ENCODE measurements at regions of chr7 and their contacts with region 1.

Region 1: GRCh38 chr7:87886875-87887274 is 10.6 kb downstream of the DBF4 start:
- DNase-seq: peak in 1 of 35 experiments; percentile 64
- ATAC-seq: no peak
- H3K4me3 ChIP-seq: no peak overlapping the region
- H3K4me3 Mint-ChIP-seq: no peak overlapping the region
- H3K27ac ChIP-seq: no peak overlapping the region
- H3K27ac Mint-ChIP-seq: no peak overlapping the region
- H3K4me1 ChIP-seq: no peaks in the 10 kb centered on the region
- H3K4me1 Mint-ChIP-seq: peaks cover 6 to 13% (median 11%) of the 10 kb centered on the region in 3 donors
- H3K27me3 ChIP-seq: no peaks in the 10 kb centered on the region
- H3K27me3 Mint-ChIP-seq: no peaks in the 10 kb centered on the region

Region 2: GRCh38 chr7:87129848-87130247 is 757.0 kb before region 1 on chr7:
- CTCF ChIA-PET with region 1: no interaction called
- POLR2A ChIA-PET with region 1: no interaction called
- DNase-seq: no peak
- ATAC-seq: no peak
- H3K4me3 ChIP-seq: no peak overlapping the region
- H3K4me3 Mint-ChIP-seq: no peak overlapping the region
- H3K27ac ChIP-seq: no peak overlapping the region
- H3K27ac Mint-ChIP-seq: no peak overlapping the region
- H3K4me1 ChIP-seq: no peaks in the 10 kb centered on the region
- H3K4me1 Mint-ChIP-seq: peaks cover 0 to 8% (median 2%) of the 10 kb centered on the region in 3 donors
- H3K27me3 ChIP-seq: no peaks in the 10 kb centered on the region
- H3K27me3 Mint-ChIP-seq: peaks cover 3 to 12% of the 10 kb centered on the region in 2 donors

Region 3: GRCh38 chr7:87506246-87507180 is 380.4 kb before region 1 on chr7:
- CTCF ChIA-PET with region 1: interaction called, 3 to 18 read pairs
- POLR2A ChIA-PET with region 1: no interaction called
- DNase-seq: peak in 1 of 35 experiments; percentile 25
- ATAC-seq: no peak
- H3K4me3 ChIP-seq: no peak overlapping the region
- H3K4me3 Mint-ChIP-seq: no peak overlapping the region
- H3K27ac ChIP-seq: no peak overlapping the region
- H3K27ac Mint-ChIP-seq: no peak overlapping the region
- H3K4me1 ChIP-seq: no peaks in the 10 kb centered on the region
- H3K4me1 Mint-ChIP-seq: no peaks in the 10 kb centered on the region
- H3K27me3 ChIP-seq: no peaks in the 10 kb centered on the region
- H3K27me3 Mint-ChIP-seq: no peaks in the 10 kb centered on the region

Region 4: DNA sequence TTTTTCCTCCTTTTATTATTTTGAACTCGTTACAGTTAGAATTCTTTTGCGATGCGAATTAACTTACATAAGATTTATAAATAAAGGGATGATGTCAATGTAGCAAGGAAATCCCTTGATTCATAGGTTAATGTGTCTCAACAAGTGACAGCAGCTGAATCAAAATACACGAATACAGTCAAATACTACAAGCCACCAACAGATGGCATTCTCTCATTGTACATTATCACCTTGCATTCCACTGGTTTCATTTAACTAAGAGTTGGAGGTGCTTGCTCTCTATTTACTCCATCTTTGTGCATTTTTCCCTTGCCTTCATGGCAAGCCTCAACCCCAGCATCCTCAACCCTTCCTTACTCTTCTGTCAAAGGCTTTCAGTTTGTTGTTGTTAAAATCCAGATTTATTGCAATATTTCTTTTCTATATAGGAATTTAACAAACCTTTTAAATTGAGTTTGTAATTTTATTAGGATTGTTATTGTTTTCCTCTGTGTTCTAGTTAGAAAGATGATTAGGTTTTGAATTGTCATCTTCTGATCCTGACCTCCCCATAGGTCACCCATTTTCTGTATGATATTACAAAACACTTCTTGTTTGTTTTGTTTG is 89.0 kb before region 1 on chr7:
- CTCF ChIA-PET with region 1: interaction called, 4 to 45 read pairs
- POLR2A ChIA-PET with region 1: interaction called in 1 of 2 experiments, 3 read pairs
- DNase-seq: peak in 2 of 35 experiments; percentile 6 to 66
- ATAC-seq: peak; percentile 47 to 78 (median 55)
- H3K4me3 ChIP-seq: no peak overlapping the region
- H3K4me3 Mint-ChIP-seq: no peak overlapping the region
- H3K27ac ChIP-seq: no peak overlapping the region
- H3K27ac Mint-ChIP-seq: no peak overlapping the region
- H3K4me1 ChIP-seq: no peaks in the 10 kb centered on the region
- H3K4me1 Mint-ChIP-seq: no peaks in the 10 kb centered on the region
- H3K27me3 ChIP-seq: no peaks in the 10 kb centered on the region
- H3K27me3 Mint-ChIP-seq: peaks cover 10 to 13% of the 10 kb centered on the region in 2 donors

Region 5: DNA sequence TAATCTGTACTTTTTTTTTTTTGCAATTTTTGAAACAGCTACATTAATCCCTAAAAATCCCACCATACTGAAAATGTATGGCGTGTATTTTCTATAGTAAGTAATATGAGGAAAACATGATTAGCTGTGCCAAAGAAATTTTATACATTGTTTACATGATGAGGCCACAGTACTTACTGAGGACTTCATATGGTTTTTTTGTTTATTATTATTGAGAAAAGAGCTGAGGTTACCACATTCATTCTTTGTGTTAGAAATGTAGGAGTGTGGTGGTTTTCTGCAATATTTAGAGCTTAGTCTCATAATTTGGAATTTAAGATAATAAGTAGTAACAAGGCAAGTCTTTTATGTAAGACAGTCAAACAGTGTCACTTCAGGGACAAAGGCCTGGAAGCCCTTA is 55.8 kb before region 1 on chr7:
- CTCF ChIA-PET with region 1: no interaction called
- POLR2A ChIA-PET with region 1: no interaction called
- DNase-seq: no peak
- ATAC-seq: no peak
- H3K4me3 ChIP-seq: no peak overlapping the region
- H3K4me3 Mint-ChIP-seq: no peak overlapping the region
- H3K27ac ChIP-seq: no peak overlapping the region
- H3K27ac Mint-ChIP-seq: no peak overlapping the region
- H3K4me1 ChIP-seq: no peaks in the 10 kb centered on the region
- H3K4me1 Mint-ChIP-seq: no peaks in the 10 kb centered on the region
- H3K27me3 ChIP-seq: no peaks in the 10 kb centered on the region
- H3K27me3 Mint-ChIP-seq: no peaks in the 10 kb centered on the region

Region 6: GRCh38 chr7:87866089-87866488 is 20.8 kb before region 1 on chr7:
- CTCF ChIA-PET with region 1: interaction called, 4 to 6 read pairs
- POLR2A ChIA-PET with region 1: interaction called, 5 to 14 read pairs
- DNase-seq: no peak
- ATAC-seq: no peak
- H3K4me3 ChIP-seq: no peak overlapping the region
- H3K4me3 Mint-ChIP-seq: no peak overlapping the region
- H3K27ac ChIP-seq: no peak overlapping the region
- H3K27ac Mint-ChIP-seq: no peak overlapping the region
- H3K4me1 ChIP-seq: no peaks in the 10 kb centered on the region
- H3K4me1 Mint-ChIP-seq: peaks cover 6 to 10% (median 7%) of the 10 kb centered on the region in 3 donors
- H3K27me3 ChIP-seq: no peaks in the 10 kb centered on the region
- H3K27me3 Mint-ChIP-seq: no peaks in the 10 kb centered on the region

Region 7: GRCh38 chr7:88686468-88687229 is 799.8 kb after region 1 on chr7:
- CTCF ChIA-PET with region 1: no interaction called
- POLR2A ChIA-PET with region 1: no interaction called
- DNase-seq: no peak
- ATAC-seq: no peak
- H3K4me3 ChIP-seq: no peak overlapping the region
- H3K4me3 Mint-ChIP-seq: no peak overlapping the region
- H3K27ac ChIP-seq: no peak overlapping the region
- H3K27ac Mint-ChIP-seq: no peak overlapping the region
- H3K4me1 ChIP-seq: no peaks in the 10 kb centered on the region
- H3K4me1 Mint-ChIP-seq: no peaks in the 10 kb centered on the region
- H3K27me3 ChIP-seq: no peaks in the 10 kb centered on the region
- H3K27me3 Mint-ChIP-seq: peaks cover 0 to 2% of the 10 kb centered on the region in 2 donors

Measured in T-cell (primary cell).